Right lobe of liver (tissue), 6 donors: ENCODE measurements at regions of chr4 and their contacts with region 1.

Region 1: GRCh38 chr4:186037692-186038658 is 31.0 kb upstream of the TLR3 start:
- DNase-seq: peak in 1 of 3 donors; percentile 59
- ATAC-seq: peak; percentile 93 to 99 (median 96)
- H3K4me3 ChIP-seq: no peak overlapping the region
- H3K27ac ChIP-seq: no peak overlapping the region
- H3K4me1 ChIP-seq: no peaks in the 10 kb centered on the region
- H3K27me3 ChIP-seq: no peaks in the 10 kb centered on the region
- CTCF ChIP-seq: peak; percentile 78 to 97 (median 81)
- POLR2A ChIP-seq: no peak

Region 2: GRCh38 chr4:185625503-185625902 is 412.5 kb before region 1 on chr4:
- intact Hi-C with region 1: loop called (anchors 10 kb)
- DNase-seq: no peak
- ATAC-seq: peak; percentile 61 to 65 (median 61)
- H3K4me3 ChIP-seq: no peak overlapping the region
- H3K27ac ChIP-seq: no peak overlapping the region
- H3K4me1 ChIP-seq: no peaks in the 10 kb centered on the region
- H3K27me3 ChIP-seq: no peaks in the 10 kb centered on the region
- CTCF ChIP-seq: no peak
- POLR2A ChIP-seq: no peak

Region 3: GRCh38 chr4:185634066-185634652 is 403.8 kb before region 1 on chr4:
- intact Hi-C with region 1: loop called (anchors 10 kb)
- DNase-seq: no peak
- ATAC-seq: peak in 2 of 4 donors; percentile 30 to 52
- H3K4me3 ChIP-seq: no peak overlapping the region
- H3K27ac ChIP-seq: no peak overlapping the region
- H3K4me1 ChIP-seq: no peaks in the 10 kb centered on the region
- H3K27me3 ChIP-seq: no peaks in the 10 kb centered on the region
- CTCF ChIP-seq: peak; percentile 45 to 64 (median 52)
- POLR2A ChIP-seq: no peak

Region 4: GRCh38 chr4:186260504-186261448 is 222.8 kb after region 1 on chr4:
- intact Hi-C with region 1: no loop called
- DNase-seq: peak; percentile 83 to 96 (median 95)
- ATAC-seq: peak; percentile 70 to 82 (median 78)
- H3K4me3 ChIP-seq: peak overlapping the region in 2 of 3 donors; percentile 36 to 39
- H3K27ac ChIP-seq: peak overlapping the region; percentile 81 to 97 (median 95)
- H3K4me1 ChIP-seq: peaks cover 0 to 52% (median 21%) of the 10 kb centered on the region in 4 donors
- H3K27me3 ChIP-seq: no peaks in the 10 kb centered on the region
- CTCF ChIP-seq: no peak
- POLR2A ChIP-seq: no peak